Ovary (tissue), 10 donors: ENCODE measurements at regions of chr6 and their contacts with region 1.

Region 1: GRCh38 chr6:144215932-144216667 is 65.8 kb downstream of the STX11 start:
- DNase-seq: peak; percentile 92 to 97 (median 95)
- H3K4me3 ChIP-seq: peak overlapping the region; percentile 56
- H3K27ac ChIP-seq: peak overlapping the region; percentile 94 to 97
- H3K4me1 ChIP-seq: peaks cover 5% of the 10 kb centered on the region
- H3K27me3 ChIP-seq: no peaks in the 10 kb centered on the region
- CTCF ChIP-seq: peak; percentile 66 to 89 (median 82)
- EP300 ChIP-seq: no peak
- POLR2A ChIP-seq: no peak

Region 2: DNA sequence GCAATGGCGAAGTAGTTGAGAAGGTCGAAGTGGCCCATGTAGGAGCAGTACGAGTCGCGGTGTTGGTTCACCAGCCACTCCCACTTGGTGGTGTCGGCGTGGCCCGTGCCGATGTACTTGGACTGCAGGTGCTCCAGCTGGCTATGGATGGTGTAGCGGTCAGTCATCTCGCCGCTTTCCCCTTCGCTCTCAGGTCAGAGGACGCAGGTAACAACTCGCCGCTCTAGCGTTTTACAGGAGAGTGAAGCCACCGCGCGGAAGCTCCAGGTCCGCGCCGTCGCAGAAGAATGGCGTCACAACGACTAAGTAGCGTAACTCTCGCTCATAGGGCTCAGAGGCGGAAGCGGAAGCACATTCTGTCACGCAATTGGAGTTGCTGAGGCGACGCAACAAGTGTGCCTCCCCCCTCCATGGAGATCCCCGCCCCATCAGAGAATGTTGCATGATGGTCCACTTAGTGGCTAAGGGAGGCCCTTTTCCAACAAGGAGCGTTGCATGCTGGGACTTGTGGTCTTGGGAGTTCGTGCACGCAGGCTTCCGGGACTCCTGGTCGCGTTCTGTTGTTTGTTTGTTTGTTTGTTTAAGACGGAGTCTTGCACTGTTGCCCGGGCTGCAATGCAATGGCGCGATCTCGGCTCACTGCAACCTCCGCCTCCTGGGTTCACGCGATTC is 120.6 kb before region 1 on chr6 and contains the start of gene SF3B5:
- intact Hi-C with region 1: loop called in 2 of 4 experiments (anchors 10 kb)
- DNase-seq: peak; percentile 97 to 98 (median 98)
- H3K4me3 ChIP-seq: peak within 1 kb of the TSS; percentile 90
- H3K27ac ChIP-seq: peak within 1 kb of the TSS in 1 of 2 donors; percentile 65
- H3K4me1 ChIP-seq: peaks cover 12% of the 10 kb centered on the region
- H3K27me3 ChIP-seq: no peaks in the 10 kb centered on the region
- CTCF ChIP-seq: peak in 1 of 3 donors; percentile 4
- EP300 ChIP-seq: no peak
- POLR2A ChIP-seq: peak; percentile 70
- total RNA-seq, gene SF3B5: 86.8 to 151 (median 117) TPM

Region 3: DNA sequence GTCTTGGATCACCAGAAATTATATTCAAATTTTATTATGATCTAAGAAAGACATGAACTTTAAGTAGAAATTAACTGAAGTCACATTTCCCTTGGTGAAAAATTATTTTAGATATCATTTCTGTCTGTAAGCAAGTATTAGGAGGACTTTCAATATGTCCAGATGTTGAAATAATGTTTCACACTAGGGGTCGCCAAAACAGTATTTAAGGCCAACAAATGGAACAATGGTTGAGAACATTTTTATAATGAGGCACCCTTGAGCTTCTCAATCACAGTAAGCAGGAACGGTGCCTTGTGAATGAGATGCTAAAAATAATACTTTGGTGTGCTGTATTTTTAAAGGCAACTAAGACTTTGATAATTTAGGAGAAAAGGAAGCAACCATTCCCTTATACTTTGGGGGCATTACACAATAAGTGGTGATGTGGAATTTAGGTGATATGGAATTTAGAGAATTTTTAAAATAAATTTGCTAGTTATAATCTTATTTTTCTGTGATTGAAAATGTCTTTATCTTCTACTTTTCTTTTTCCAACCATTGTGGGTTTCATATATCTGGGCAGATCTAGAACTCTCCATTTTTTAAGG is 111.1 kb before region 1 on chr6:
- intact Hi-C with region 1: loop called in 2 of 4 experiments (anchors 5 to 10 kb)
- DNase-seq: no peak
- H3K4me3 ChIP-seq: no peak overlapping the region
- H3K27ac ChIP-seq: no peak overlapping the region
- H3K4me1 ChIP-seq: no peaks in the 10 kb centered on the region
- H3K27me3 ChIP-seq: no peaks in the 10 kb centered on the region
- CTCF ChIP-seq: peak; percentile 41 to 70 (median 55)
- EP300 ChIP-seq: no peak
- POLR2A ChIP-seq: no peak

Region 4: GRCh38 chr6:144482142-144482541 is 266.0 kb after region 1 on chr6:
- intact Hi-C with region 1: loop called in 3 of 4 experiments (anchors 5 kb)
- DNase-seq: peak; percentile 75 to 86 (median 82)
- H3K4me3 ChIP-seq: no peak overlapping the region
- H3K27ac ChIP-seq: no peak overlapping the region
- H3K4me1 ChIP-seq: peaks cover 7% of the 10 kb centered on the region
- H3K27me3 ChIP-seq: no peaks in the 10 kb centered on the region
- CTCF ChIP-seq: peak in 2 of 3 donors; percentile 21 to 43
- EP300 ChIP-seq: no peak
- POLR2A ChIP-seq: no peak